Transverse colon (tissue), 4 donors: ENCODE measurements at regions of chr19 and their contacts with region 1.

Region 1: GRCh38 chr19:5262721-5263120 is 77.9 kb downstream of the PTPRS start:
- DNase-seq: no peak
- H3K4me3 ChIP-seq: no peak overlapping the region
- H3K27ac ChIP-seq: no peak overlapping the region
- H3K4me1 ChIP-seq: no peaks in the 10 kb centered on the region
- H3K27me3 ChIP-seq: no peaks in the 10 kb centered on the region
- CTCF ChIP-seq: no peak
- EP300 ChIP-seq: no peak
- POLR2A ChIP-seq: no peak

Region 2: GRCh38 chr19:5138606-5139582 is 123.8 kb before region 1 on chr19:
- in situ Hi-C with region 1: no loop called
- intact Hi-C with region 1: no loop called
- DNase-seq: peak; percentile 71
- H3K4me3 ChIP-seq: no peak overlapping the region
- H3K27ac ChIP-seq: no peak overlapping the region
- H3K4me1 ChIP-seq: no peaks in the 10 kb centered on the region
- H3K27me3 ChIP-seq: no peaks in the 10 kb centered on the region
- CTCF ChIP-seq: no peak
- EP300 ChIP-seq: no peak
- POLR2A ChIP-seq: no peak

Region 3: GRCh38 chr19:5149932-5150901 is 112.5 kb before region 1 on chr19:
- in situ Hi-C with region 1: no loop called
- intact Hi-C with region 1: no loop called
- DNase-seq: no peak
- H3K4me3 ChIP-seq: no peak overlapping the region
- H3K27ac ChIP-seq: no peak overlapping the region
- H3K4me1 ChIP-seq: no peaks in the 10 kb centered on the region
- H3K27me3 ChIP-seq: no peaks in the 10 kb centered on the region
- CTCF ChIP-seq: no peak
- EP300 ChIP-seq: no peak
- POLR2A ChIP-seq: no peak

Region 4: DNA sequence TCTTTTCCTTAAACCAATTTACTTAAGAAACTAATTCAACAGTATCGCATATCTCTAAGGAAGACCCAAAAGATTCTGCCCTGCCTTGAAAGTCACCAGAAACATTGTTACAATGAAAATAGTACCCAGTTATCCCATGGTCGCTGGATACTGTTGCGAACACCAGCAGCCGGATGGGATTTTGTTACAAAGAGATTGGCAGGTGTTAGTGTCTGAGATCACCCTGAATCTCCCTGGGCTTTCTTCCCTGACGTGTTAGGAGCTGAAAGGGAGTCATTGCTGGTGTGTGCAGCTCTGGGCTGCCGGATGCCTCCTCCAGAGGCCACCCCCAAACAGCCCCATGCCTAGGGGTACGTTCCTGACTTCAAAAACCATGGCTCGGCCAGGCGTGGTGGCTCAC is 39.7 kb after region 1 on chr19:
- in situ Hi-C with region 1: no loop called
- intact Hi-C with region 1: loop called (anchors 1 kb)
- DNase-seq: no peak
- H3K4me3 ChIP-seq: no peak overlapping the region
- H3K27ac ChIP-seq: no peak overlapping the region
- H3K4me1 ChIP-seq: no peaks in the 10 kb centered on the region
- H3K27me3 ChIP-seq: no peaks in the 10 kb centered on the region
- CTCF ChIP-seq: no peak
- EP300 ChIP-seq: no peak
- POLR2A ChIP-seq: no peak

Region 5: GRCh38 chr19:5403968-5404640 is 141.4 kb after region 1 on chr19:
- in situ Hi-C with region 1: no loop called
- intact Hi-C with region 1: no loop called
- DNase-seq: peak; percentile 67
- H3K4me3 ChIP-seq: no peak overlapping the region
- H3K27ac ChIP-seq: no peak overlapping the region
- H3K4me1 ChIP-seq: no peaks in the 10 kb centered on the region
- H3K27me3 ChIP-seq: peaks cover 2% of the 10 kb centered on the region
- CTCF ChIP-seq: no peak
- EP300 ChIP-seq: no peak
- POLR2A ChIP-seq: no peak

Region 6: GRCh38 chr19:5452594-5453565 is 190.2 kb after region 1 on chr19:
- in situ Hi-C with region 1: no loop called
- intact Hi-C with region 1: no loop called
- DNase-seq: no peak
- H3K4me3 ChIP-seq: no peak overlapping the region
- H3K27ac ChIP-seq: no peak overlapping the region
- H3K4me1 ChIP-seq: no peaks in the 10 kb centered on the region
- H3K27me3 ChIP-seq: peaks cover 30% of the 10 kb centered on the region
- CTCF ChIP-seq: no peak
- EP300 ChIP-seq: no peak
- POLR2A ChIP-seq: no peak